ENCODE measurements at regions of chr17 and their contacts with region 1.

Region 1: GRCh38 chr17:72120642-72121163 is at the start of gene SOX9:
- DNase-seq: peak; percentile 91 to 92
- H3K4me3 ChIP-seq: peak within 1 kb of the TSS; percentile 90
- H3K27ac ChIP-seq: peak within 1 kb of the TSS; percentile 89
- H3K4me1 ChIP-seq: peaks cover 40% of the 10 kb centered on the region
- H3K27me3 ChIP-seq: no peaks in the 10 kb centered on the region
- CTCF ChIP-seq: no peak
- total RNA-seq, gene SOX9: 21.7 and 25.0 TPM in 2 replicates

Region 2: DNA sequence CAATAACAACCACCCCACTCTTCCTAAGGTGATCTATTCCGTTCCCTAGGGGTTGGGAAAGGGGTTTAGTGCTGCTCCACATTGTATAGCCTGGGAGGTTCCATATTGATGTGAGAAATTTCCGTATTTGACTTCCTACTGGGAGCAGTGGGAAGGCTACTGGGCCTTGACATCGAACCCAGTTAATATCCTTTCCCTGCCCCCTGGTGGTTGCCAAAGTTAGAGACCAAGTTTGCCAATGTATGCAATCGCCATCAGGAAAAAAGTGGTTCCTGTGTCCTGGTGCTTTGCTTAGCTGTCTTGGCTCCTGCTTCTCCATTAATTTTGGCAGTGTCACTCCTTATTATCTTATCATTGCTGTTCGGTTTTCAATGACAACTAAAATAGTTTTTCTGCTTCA is 1036.5 kb before region 1 on chr17:
- CTCF ChIA-PET with region 1: no interaction called
- POLR2A ChIA-PET with region 1: no interaction called
- intact Hi-C with region 1: loop called (anchors 10 kb)
- DNase-seq: no peak
- H3K4me3 ChIP-seq: no peak overlapping the region
- H3K27ac ChIP-seq: no peak overlapping the region
- H3K4me1 ChIP-seq: no peaks in the 10 kb centered on the region
- H3K27me3 ChIP-seq: no peaks in the 10 kb centered on the region
- CTCF ChIP-seq: peak; percentile 48

Region 3: DNA sequence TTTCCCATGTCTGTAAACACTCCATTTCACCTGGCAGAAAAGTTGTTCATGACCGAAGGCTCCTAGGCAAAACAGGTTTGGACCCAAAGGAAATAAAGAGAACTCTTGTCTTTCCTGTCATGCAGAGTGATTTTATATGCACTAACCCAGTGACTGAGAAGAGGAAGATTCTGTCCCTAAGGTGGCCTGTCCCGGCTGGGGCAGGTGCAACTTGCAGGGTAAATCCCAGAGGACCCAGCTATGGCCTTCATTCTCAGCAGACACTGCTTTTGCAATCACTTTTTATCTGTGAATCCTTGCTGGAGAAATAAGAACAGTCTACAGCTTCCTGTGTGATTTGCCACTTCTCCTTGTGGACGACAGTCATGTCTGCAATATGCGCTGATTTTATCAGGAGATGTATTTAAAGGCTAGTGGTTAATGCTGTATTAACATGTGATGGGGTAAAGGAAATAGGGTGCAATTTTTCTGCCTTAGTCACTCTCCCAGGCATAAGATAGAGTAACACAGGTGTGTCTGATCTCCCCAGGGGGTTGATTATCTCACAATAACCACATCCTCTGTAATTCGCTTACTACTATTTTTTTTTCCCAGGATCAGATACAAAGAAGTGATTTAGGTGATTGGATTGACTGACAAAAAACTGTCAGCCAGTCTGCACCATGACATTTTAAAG is 696.7 kb before region 1 on chr17:
- CTCF ChIA-PET with region 1: no interaction called
- POLR2A ChIA-PET with region 1: interaction called, 3 read pairs
- intact Hi-C with region 1: loop called (anchors 1 kb)
- DNase-seq: peak; percentile 59 to 98
- H3K4me3 ChIP-seq: 0 out of 2 replicates have a peak overlapping the region, but pooled peaks have one; percentile 10
- H3K27ac ChIP-seq: peak overlapping the region; percentile 96
- H3K4me1 ChIP-seq: peaks cover 24% of the 10 kb centered on the region
- H3K27me3 ChIP-seq: no peaks in the 10 kb centered on the region
- CTCF ChIP-seq: peak; percentile 30; the same call in 1 of the 2 replicates

Region 4: GRCh38 chr17:71764505-71764904 is 356.2 kb before region 1 on chr17:
- CTCF ChIA-PET with region 1: no interaction called
- POLR2A ChIA-PET with region 1: no interaction called
- intact Hi-C with region 1: loop called (anchors 5 kb)
- DNase-seq: no peak
- H3K4me3 ChIP-seq: no peak overlapping the region
- H3K27ac ChIP-seq: no peak overlapping the region
- H3K4me1 ChIP-seq: no peaks in the 10 kb centered on the region; the same call in 1 of the 2 replicates
- H3K27me3 ChIP-seq: no peaks in the 10 kb centered on the region
- CTCF ChIP-seq: peak; percentile 48; the same call in 1 of the 2 replicates

Region 5: DNA sequence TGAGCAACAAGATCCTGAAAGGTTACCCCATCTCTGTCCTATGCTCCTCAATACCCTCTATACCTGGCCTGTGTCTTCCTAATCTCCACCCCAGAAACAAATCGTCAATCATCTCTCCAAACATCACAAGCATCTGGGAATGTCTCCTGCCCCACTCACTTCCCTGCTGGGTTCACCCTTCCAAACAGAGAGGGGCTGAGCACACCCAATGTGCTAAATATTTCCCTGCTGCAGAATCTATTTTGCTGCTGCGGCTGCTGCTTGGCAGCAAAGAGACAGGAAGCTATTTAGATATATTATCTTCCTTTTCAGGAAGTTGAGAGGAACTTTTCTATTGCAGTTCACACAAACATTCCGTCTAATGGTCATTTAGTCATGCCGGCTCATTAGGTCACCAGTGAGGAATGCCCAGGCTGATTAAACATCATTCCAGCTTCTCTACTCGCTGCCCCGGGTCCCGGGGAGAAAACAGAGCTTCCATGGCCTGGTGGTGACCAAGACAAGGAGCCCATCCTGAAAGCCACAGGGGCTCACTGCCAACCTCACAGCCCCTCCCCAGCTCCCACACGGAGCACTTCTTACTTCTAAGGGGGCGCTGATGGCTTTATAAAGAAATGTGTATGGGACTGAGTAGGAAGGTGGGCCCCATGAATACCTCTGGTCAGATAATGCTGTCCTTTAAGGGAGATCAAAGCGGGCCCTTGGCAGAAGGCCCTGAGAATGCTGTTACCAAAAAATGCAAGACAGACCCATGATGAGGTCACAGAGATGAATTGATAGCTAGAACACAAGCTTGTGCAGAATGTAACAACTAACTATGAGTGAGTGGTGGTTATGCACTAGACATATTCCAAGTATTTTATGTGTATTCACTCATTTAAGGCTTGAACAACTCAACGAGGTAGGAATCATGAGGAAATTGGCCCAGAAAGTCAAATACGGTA is 218.4 kb after region 1 on chr17:
- CTCF ChIA-PET with region 1: interaction called, 8 read pairs
- POLR2A ChIA-PET with region 1: interaction called, 4 read pairs
- intact Hi-C with region 1: loop called (anchors 1 kb)
- DNase-seq: peak; percentile 81 to 97
- H3K4me3 ChIP-seq: no peak overlapping the region; the same call in 1 of the 2 replicates
- H3K27ac ChIP-seq: peak overlapping the region; percentile 88
- H3K4me1 ChIP-seq: peaks cover 34% of the 10 kb centered on the region
- H3K27me3 ChIP-seq: no peaks in the 10 kb centered on the region
- CTCF ChIP-seq: no peak

Region 6: GRCh38 chr17:72421128-72422092 is 300.7 kb after region 1 on chr17:
- CTCF ChIA-PET with region 1: no interaction called
- POLR2A ChIA-PET with region 1: interaction called, 8 read pairs
- intact Hi-C with region 1: loop called (anchors 1 kb)
- DNase-seq: peak; percentile 90 to 99
- H3K4me3 ChIP-seq: peak overlapping the region; percentile 56; the same call in 1 of the 2 replicates
- H3K27ac ChIP-seq: peak overlapping the region; percentile 98
- H3K4me1 ChIP-seq: peaks cover 66% of the 10 kb centered on the region
- H3K27me3 ChIP-seq: no peaks in the 10 kb centered on the region
- CTCF ChIP-seq: no peak

Region 7: DNA sequence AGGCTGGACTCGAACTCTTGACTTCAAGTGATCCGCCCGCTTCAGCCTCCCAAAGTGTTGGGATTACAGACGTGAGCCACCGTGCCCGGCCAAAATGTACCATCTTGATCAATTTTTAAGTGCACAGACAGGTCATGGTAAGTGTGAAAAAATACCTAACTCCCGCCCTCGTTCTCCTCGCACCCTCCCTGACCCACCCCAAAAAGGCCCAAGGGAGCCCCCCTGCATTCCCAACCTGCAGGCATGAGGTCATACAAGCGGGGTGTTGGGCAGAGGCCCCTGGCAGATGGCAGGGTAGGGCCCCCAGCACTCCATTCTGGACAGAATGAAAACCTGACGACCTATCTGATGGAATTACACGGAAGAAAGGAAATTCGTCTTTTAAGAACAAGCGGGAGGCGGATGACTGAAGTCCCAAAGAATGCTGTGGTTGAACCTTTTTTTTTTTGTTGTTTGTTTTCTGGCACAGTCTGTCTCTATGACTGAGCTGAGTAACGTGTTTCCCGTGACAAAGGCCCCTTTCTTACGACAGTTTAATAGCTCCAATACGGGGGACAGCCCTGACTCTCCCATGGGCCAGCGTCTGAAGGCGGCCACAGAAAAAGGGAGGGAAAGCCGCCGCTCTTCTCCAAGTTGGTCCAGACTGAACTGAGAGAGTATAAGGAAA is 595.3 kb after region 1 on chr17:
- CTCF ChIA-PET with region 1: no interaction called
- POLR2A ChIA-PET with region 1: interaction called, 20 read pairs
- intact Hi-C with region 1: loop called (anchors 5 kb)
- DNase-seq: peak; percentile 82 to 98
- H3K4me3 ChIP-seq: peak overlapping the region; percentile 47; the same call in 1 of the 2 replicates
- H3K27ac ChIP-seq: peak overlapping the region; percentile 97
- H3K4me1 ChIP-seq: peaks cover 55% of the 10 kb centered on the region
- H3K27me3 ChIP-seq: no peaks in the 10 kb centered on the region
- CTCF ChIP-seq: no peak